Vagina (tissue), 2 donors: ENCODE measurements at regions of chr10 and their contacts with region 1.

Region 1: DNA sequence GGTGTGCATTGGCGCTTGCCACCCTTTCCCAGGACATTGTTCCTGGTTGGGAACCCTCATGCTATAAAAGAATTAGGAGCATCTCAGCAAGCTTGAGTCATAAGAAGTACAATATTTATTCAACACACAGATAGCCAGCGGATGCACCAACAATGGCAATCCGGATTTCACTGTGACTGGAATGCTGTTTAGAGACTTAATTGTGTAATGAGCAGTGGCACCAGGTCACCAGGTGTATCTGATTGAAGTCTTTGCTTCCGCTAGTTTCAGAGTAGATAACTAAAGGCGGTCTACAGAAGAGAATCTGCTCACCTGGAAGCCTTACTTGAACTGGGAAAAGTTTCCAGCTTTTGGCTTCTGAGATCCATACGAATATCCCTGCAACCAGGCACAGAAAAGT is 772.3 kb upstream of the GHITM start:
- DNase-seq: no peak
- H3K4me3 ChIP-seq: no peak overlapping the region
- H3K27ac ChIP-seq: no peak overlapping the region
- H3K4me1 ChIP-seq: no peaks in the 10 kb centered on the region
- H3K27me3 ChIP-seq: no peaks in the 10 kb centered on the region
- CTCF ChIP-seq: no peak
- POLR2A ChIP-seq: no peak

Region 2: DNA sequence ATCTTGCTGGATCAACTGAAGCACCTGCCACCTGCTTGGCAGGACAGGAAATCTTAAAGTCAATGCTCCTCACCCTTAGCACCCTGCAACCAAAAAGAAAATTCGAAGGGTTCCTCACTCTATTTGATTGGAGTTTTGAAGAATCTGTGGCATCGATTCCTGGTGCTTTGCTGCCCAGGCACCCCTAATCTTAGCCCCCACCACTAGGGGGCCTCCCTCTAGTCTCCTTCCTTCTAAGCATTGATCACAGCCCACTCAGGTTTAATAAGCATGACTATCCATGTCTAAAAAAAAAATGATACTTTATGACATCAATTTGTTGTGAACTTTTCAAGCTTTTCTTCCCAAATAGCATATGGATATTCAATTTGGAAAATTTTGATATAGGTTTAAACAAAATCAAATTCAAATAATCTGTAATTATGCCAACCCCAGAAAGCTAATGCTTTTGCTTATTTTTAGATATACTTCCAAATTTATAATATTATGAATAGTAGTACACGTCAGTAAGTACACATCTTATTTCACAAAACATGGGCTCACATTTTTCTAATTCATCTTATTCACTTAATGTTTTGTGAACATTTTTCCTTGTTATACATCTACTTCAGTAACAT is 1446.7 kb before region 1 on chr10:
- intact Hi-C with region 1: no loop called
- DNase-seq: no peak
- H3K4me3 ChIP-seq: no peak overlapping the region
- H3K27ac ChIP-seq: no peak overlapping the region
- H3K4me1 ChIP-seq: no peaks in the 10 kb centered on the region
- H3K27me3 ChIP-seq: no peaks in the 10 kb centered on the region
- CTCF ChIP-seq: no peak
- POLR2A ChIP-seq: no peak

Region 3: DNA sequence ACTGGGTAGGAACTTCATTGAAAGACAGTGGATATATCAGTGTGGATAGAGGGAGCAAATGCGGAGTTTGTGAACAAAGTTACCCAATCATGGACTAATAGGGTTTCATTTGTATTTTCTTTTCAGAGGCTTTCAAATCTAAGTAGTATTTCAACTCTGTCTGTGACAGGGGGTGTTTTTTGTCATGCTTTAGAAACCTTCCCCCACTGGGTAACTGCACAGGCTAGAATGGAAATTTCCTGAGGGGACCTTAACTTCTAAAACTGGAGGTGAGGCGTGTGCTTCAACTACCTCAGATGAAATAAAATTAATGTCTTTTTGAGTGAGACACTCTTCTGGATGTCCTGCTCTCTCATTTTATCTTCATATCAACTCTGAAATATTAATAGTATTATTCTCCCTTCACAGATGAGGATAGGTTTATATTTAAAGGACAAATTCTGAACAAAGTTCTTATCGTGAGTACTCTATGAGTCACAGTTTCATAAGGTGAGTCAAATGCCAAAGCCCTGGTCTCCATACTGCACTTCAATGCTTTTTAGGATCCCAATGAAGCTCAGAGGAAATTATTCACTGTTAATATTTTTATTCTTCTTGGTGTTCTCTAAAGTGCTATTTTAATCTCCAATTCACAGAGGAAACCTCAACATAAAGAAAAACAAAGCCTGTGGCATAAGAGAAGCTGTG is 1731.9 kb after region 1 on chr10:
- intact Hi-C with region 1: loop called (anchors 5 kb)
- DNase-seq: no peak
- H3K4me3 ChIP-seq: no peak overlapping the region
- H3K27ac ChIP-seq: no peak overlapping the region
- H3K4me1 ChIP-seq: no peaks in the 10 kb centered on the region
- H3K27me3 ChIP-seq: no peaks in the 10 kb centered on the region
- CTCF ChIP-seq: no peak
- POLR2A ChIP-seq: no peak